Posterior cingulate gyrus (tissue), 11 donors: ENCODE measurements at regions of chr3 and their contacts with region 1.

Region 1: DNA sequence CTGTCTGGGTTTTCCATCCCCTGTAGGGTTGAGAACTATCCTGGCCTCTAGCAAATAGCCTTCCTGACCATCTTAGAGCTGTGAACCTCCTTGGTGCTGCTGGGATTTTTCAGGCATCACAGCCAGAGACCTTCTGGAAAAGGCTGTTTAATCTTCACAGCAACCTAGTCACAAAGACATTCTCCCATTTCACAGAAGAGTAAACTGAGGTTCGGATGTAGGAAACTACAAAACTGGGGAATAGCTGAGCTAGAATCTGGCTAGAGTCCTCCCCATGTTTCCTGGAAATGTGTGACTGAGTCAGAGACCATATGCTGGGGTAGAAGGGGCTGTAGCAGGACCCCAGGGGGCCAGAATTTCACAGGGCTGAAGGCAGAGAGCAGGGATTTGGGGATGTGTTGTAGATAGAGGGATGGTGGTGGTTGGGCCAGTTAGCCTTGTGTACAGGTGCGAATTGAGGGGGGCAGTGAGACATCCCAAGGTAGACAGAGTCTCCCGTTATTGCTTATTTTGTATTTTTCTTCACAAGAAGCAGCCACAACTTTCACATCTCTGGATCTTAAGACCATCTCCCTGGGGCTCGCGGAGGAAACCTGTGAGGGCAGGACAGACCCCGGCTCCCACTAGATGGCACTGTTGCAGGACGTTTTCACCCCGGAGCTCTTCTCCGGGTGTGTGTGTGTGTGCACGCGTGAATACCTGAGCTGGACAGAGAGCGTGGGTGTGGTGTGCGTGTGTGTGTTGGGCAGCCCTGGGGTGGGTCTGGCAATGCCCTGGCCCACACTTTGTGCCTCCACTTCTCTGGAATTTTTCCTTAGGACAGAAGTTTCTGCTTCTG is 66.9 kb upstream of the PRR23C start:
- DNase-seq: peak; percentile 35 to 95 (median 78)

Region 2: DNA sequence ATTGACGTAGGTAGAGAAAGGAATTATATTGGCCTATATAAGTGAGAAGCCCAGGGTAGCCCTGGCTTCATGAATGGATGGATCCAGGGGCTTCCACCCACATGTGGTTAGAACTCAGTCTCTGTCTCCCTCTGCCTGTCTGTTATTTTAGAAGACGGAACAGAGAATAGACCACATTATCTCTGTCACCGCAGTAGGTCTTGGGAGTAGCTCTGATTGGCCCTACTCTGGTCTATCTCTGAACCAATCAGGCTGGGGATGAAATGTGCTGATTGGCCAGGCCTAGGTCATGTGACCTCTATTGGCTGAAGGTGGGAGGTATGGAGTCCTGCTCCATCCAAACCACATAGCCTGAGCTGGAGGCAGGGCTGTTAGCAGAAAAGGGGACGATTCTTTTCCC is 76.0 kb after region 1 on chr3:
- intact Hi-C with region 1: loop called (anchors 5 kb)
- DNase-seq: no peak

Region 3: GRCh38 chr3:139202226-139202958 is 90.8 kb after region 1 on chr3:
- intact Hi-C with region 1: loop called (anchors 5 kb)
- DNase-seq: peak in 7 of 10 donors; percentile 28 to 89 (median 63)

Region 4: DNA sequence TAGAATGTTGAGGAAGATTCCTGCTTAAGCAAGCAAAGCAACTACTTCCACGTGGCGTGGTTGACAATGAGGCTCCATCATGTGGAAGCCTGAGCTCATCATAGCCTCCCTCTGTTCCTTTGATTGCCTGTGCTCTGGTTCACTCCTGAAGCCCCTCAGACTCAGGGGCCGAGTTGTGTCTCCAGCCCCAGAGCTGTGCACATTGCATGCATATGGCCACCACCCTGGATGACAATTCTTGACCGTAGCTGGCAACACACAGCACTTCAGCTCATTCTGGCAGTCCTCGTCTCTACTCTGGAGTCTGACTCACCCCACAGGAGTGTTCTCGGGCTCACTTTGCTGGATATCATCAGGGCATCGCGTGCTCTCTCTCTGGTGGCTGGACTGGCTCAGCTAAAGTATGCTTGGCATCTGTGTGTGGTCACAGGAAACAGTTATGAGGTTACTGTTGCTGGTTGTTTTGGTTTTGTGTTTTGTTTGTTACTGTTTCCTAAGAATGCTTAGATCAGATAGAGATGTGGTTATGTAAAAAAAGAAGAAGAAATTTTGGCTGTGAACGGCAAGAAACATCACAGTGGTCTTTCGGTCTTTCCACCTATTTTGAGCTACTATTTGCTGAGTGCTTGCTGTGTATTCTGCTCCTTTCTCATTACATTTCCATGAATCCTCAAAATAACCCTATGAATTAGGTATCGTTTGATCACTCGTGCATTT is 190.6 kb after region 1 on chr3:
- intact Hi-C with region 1: no loop called
- DNase-seq: peak in 1 of 10 donors; percentile 46

Region 5: GRCh38 chr3:139329345-139329850 is 217.8 kb after region 1 on chr3:
- intact Hi-C with region 1: loop called (anchors 2 kb)
- DNase-seq: peak; percentile 74 to 98 (median 91)